CD14-positive monocyte (primary cell): ENCODE measurements at regions of chr19 and their contacts with region 1.

Region 1: GRCh38 chr19:45862564-45863334 is at the start of gene SYMPK:
- DNase-seq: peak; percentile 98
- H3K4me3 ChIP-seq: peak within 1 kb of the TSS; percentile 80 to 89 (median 86)
- H3K4me3 Mint-ChIP-seq: peak within 1 kb of the TSS; percentile 88 to 92
- H3K27ac ChIP-seq: peak within 1 kb of the TSS; percentile 94 to 97
- H3K27ac Mint-ChIP-seq: peak within 1 kb of the TSS; percentile 87 to 98 (median 97)
- H3K4me1 ChIP-seq: peaks cover 27 to 37% of the 10 kb centered on the region in 2 donors
- H3K4me1 Mint-ChIP-seq: peaks cover 30% of the 10 kb centered on the region
- H3K27me3 ChIP-seq: peaks cover 21 to 35% of the 10 kb centered on the region in 2 donors
- H3K27me3 Mint-ChIP-seq: peaks cover 37 to 48% (median 46%) of the 10 kb centered on the region in 3 donors
- CTCF ChIP-seq: no peak
- polyA plus RNA-seq, gene SYMPK: 5.6 to 96.1 (median 15.7) TPM

Region 2: GRCh38 chr19:45730389-45731288 is 132.1 kb before region 1 on chr19 and contains the start of gene FBXO46:
- intact Hi-C with region 1: loop called in 1 of 2 experiments (anchors 10 kb)
- DNase-seq: peak; percentile 95 to 96 (median 95)
- H3K4me3 ChIP-seq: peak within 1 kb of the TSS; percentile 70 to 90 (median 72)
- H3K4me3 Mint-ChIP-seq: peak within 1 kb of the TSS; percentile 84 to 97
- H3K27ac ChIP-seq: peak within 1 kb of the TSS; percentile 11 to 90
- H3K27ac Mint-ChIP-seq: peak within 1 kb of the TSS; percentile 87 to 97 (median 93)
- H3K4me1 ChIP-seq: peaks cover 14 to 19% of the 10 kb centered on the region in 2 donors
- H3K4me1 Mint-ChIP-seq: peaks cover 22% of the 10 kb centered on the region
- H3K27me3 ChIP-seq: no peaks in the 10 kb centered on the region
- H3K27me3 Mint-ChIP-seq: peaks cover 0 to under 1% (median 0%) of the 10 kb centered on the region in 3 donors
- CTCF ChIP-seq: no peak
- polyA plus RNA-seq, gene FBXO46: 3.8 to 6.8 (median 5.5) TPM

Region 3: GRCh38 chr19:45886427-45887199 is 23.9 kb after region 1 on chr19:
- intact Hi-C with region 1: loop called (anchors 1 kb)
- DNase-seq: peak; percentile 85 to 89 (median 86)
- H3K4me3 ChIP-seq: peak overlapping the region; percentile 63 to 89 (median 83)
- H3K4me3 Mint-ChIP-seq: peak overlapping the region; percentile 96 to 98
- H3K27ac ChIP-seq: peak overlapping the region; percentile 89 to 94
- H3K27ac Mint-ChIP-seq: peak overlapping the region; percentile 96 to 99 (median 97)
- H3K4me1 ChIP-seq: peaks cover 30 to 42% of the 10 kb centered on the region in 2 donors
- H3K4me1 Mint-ChIP-seq: peaks cover 19% of the 10 kb centered on the region
- H3K27me3 ChIP-seq: peaks cover 0 to 10% of the 10 kb centered on the region in 2 donors
- H3K27me3 Mint-ChIP-seq: peaks cover 3 to 4% (median 3%) of the 10 kb centered on the region in 3 donors
- CTCF ChIP-seq: no peak

Region 4: DNA sequence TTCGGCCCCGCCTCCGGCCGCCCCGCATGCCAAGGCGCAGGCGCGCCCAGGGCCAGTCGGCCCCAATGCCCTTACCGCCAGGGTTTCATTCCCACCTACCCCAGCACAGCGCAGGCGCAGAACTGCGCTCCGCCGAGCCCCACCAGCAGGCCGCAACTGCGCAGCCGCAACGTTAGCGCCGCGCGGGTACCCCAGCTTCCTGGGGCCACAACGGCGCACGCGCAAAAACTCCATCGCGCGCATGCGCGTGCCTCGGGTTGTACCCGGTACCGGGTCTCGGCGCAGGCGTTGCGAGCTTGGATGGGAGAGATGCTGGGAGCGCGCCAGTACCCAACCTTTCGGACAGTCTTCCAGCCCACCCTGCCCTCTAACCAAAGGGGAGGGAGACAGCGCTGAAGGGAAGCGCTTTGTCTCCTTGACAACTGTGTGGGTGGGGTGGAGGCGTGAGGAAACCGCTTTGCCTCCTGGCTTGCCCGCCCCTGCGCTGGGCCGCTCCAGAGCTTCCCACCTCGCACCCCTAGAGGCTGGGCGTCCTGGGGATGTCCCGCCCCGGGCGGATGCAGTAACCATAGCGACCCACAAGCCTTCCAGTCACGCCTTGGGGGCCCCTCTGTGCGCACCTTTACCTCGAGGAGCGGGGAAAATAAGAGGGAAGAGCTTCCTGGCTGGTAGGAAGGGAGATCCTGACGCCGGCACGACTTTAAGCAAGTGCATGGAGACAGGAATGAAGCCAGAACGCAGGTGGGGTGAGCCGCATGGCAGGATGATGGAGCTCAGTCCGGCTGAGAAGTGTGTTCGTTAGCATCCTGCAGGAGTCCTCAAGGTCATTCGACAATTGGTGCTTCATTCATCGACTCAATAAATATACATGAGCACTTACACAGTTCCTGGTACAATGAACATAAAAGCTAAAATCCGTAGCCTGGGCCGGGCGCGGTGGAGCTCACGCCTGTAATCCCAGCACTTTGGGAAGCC is 40.2 kb after region 1 on chr19:
- intact Hi-C with region 1: loop called in 1 of 2 experiments (anchors 5 kb)
- DNase-seq: peak; percentile 97 to 98 (median 98)
- H3K4me3 ChIP-seq: peak overlapping the region; percentile 67 to 94 (median 93)
- H3K4me3 Mint-ChIP-seq: peak overlapping the region; percentile 80 to 95
- H3K27ac ChIP-seq: peak overlapping the region; percentile 75 to 79
- H3K27ac Mint-ChIP-seq: peak overlapping the region; percentile 37 to 92 (median 83)
- H3K4me1 ChIP-seq: peaks cover 19 to 31% of the 10 kb centered on the region in 2 donors
- H3K4me1 Mint-ChIP-seq: peaks cover 21% of the 10 kb centered on the region
- H3K27me3 ChIP-seq: no peaks in the 10 kb centered on the region
- H3K27me3 Mint-ChIP-seq: peaks cover 7 to 23% (median 23%) of the 10 kb centered on the region in 3 donors
- CTCF ChIP-seq: no peak

Region 5: DNA sequence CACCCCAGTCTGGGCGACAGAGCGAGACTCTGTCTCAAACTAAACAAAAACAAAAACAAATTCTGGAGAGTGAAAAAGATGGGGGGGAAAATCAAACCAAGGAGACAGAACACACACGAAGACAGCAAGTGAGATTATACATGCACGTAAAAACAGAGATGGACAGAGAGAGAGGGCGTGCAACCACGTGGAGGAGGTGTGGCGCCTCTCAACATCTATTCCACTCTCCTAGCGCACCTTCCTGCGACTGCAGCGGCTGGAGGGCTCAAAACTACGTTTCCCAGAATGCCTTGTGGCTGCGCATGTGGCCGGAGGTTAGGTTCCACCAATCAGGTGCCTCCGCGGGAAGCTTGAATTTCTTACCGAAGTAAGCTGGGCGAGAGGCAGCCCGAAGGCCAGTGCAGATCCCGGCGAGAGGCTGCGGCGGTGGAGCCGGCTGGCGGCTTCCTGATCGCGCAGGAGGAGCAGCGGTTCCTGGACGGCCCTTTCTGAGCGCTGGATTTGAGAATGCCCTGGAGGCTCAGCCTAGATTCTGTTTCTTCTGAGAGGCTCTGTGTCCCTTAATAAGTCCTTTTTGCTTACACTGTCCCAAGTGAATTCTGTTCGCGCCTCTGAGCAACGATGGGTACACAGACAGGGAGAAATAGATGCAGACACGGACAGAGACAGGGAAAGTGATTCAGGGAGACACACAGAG is 65.0 kb after region 1 on chr19:
- intact Hi-C with region 1: loop called in 1 of 2 experiments (anchors 10 kb)
- DNase-seq: peak; percentile 78 to 86 (median 85)
- H3K4me3 ChIP-seq: peak overlapping the region in 1 of 3 experiments; percentile 45
- H3K4me3 Mint-ChIP-seq: peak overlapping the region in 1 of 2 donors; percentile 66
- H3K27ac ChIP-seq: no peak overlapping the region
- H3K27ac Mint-ChIP-seq: peak overlapping the region in 1 of 7 donors; percentile 16
- H3K4me1 ChIP-seq: peaks cover 7 to 9% of the 10 kb centered on the region in 2 donors
- H3K4me1 Mint-ChIP-seq: peaks cover 8% of the 10 kb centered on the region
- H3K27me3 ChIP-seq: peaks cover 0 to 4% of the 10 kb centered on the region in 2 donors
- H3K27me3 Mint-ChIP-seq: peaks cover 11 to 34% (median 28%) of the 10 kb centered on the region in 3 donors
- CTCF ChIP-seq: no peak

Region 6: GRCh38 chr19:45994989-45995714 is 132.4 kb after region 1 on chr19 and contains the start of gene CCDC61:
- intact Hi-C with region 1: loop called in 1 of 2 experiments (anchors 2 kb)
- DNase-seq: peak; percentile 99 to 100 (median 99)
- H3K4me3 ChIP-seq: peak within 1 kb of the TSS; percentile 56 to 91 (median 72)
- H3K4me3 Mint-ChIP-seq: no peak within 1 kb of the TSS
- H3K27ac ChIP-seq: peak within 1 kb of the TSS; percentile 3 to 82
- H3K27ac Mint-ChIP-seq: peak within 1 kb of the TSS in 1 of 7 donors; percentile 54
- H3K4me1 ChIP-seq: peaks cover 21 to 26% of the 10 kb centered on the region in 2 donors
- H3K4me1 Mint-ChIP-seq: peaks cover 13% of the 10 kb centered on the region
- H3K27me3 ChIP-seq: peaks cover 0 to 6% of the 10 kb centered on the region in 2 donors
- H3K27me3 Mint-ChIP-seq: peaks cover 13 to 16% (median 13%) of the 10 kb centered on the region in 3 donors
- CTCF ChIP-seq: no peak
- polyA plus RNA-seq, gene CCDC61: 4.3 to 8.8 (median 6.1) TPM

Region 7: GRCh38 chr19:46850228-46851203 is 987.8 kb after region 1 on chr19 and contains the start of gene AP2S1:
- intact Hi-C with region 1: loop called in 1 of 2 experiments (anchors 10 kb)
- DNase-seq: peak; percentile 96 to 98 (median 97)
- H3K4me3 ChIP-seq: peak within 1 kb of the TSS; percentile 75 to 92 (median 79)
- H3K4me3 Mint-ChIP-seq: peak within 1 kb of the TSS; percentile 95 to 100
- H3K27ac ChIP-seq: peak within 1 kb of the TSS; percentile 60 to 78
- H3K27ac Mint-ChIP-seq: peak within 1 kb of the TSS; percentile 88 to 96 (median 93)
- H3K4me1 ChIP-seq: peaks cover 32 to 40% of the 10 kb centered on the region in 2 donors
- H3K4me1 Mint-ChIP-seq: peaks cover 37% of the 10 kb centered on the region
- H3K27me3 ChIP-seq: no peaks in the 10 kb centered on the region
- H3K27me3 Mint-ChIP-seq: peaks cover 3 to 6% (median 4%) of the 10 kb centered on the region in 3 donors
- CTCF ChIP-seq: no peak
- polyA plus RNA-seq, gene AP2S1: 123 to 194 (median 170) TPM